ENCODE measurements at regions of chr11 and their contacts with region 1.

Region 1: DNA sequence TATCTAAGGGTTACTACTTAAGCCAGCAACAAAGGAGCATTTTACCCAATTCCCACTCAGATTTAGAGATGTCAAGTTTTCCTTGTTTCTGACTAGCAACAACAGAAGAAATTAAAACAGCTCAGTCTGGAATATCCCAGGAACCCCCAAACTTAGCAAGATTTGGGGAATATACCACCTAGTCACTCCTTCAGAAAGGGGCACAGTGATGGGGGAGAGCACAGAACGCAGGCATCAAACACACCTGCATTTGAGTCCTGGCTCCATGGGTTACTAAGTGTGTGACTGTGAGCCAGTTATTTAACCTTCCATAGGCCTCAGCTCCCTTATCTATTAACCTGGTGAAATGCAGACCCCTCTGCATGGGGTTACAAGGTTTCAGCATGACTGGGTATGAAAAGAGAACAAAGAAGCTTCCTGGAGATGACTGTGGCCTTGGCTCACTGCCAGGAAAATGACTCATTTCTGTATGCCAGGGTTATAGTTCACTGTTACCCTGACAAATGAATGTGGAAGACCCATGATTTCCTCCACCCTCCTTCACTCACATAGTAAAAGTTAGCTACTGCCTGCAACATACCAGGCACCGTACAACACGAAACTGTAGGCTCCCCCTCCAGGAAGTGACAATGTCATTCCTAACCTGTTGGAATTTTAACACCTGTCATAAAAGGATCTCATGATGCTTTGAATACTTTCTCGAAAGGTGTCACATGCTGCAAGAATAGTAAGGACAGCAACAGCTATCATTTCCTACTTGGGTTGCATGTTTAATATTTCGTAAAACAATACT is 79.6 kb downstream of the ME3 start:
- DNase-seq: peak; percentile 91 to 100
- H3K4me3 ChIP-seq: no peak overlapping the region
- H3K27ac ChIP-seq: peak overlapping the region; percentile 97
- H3K4me1 ChIP-seq: peaks cover 66% of the 10 kb centered on the region
- H3K27me3 ChIP-seq: no peaks in the 10 kb centered on the region
- CTCF ChIP-seq: no peak

Region 2: GRCh38 chr11:86473991-86474833 is 118.6 kb before region 1 on chr11:
- CTCF ChIA-PET with region 1: no interaction called
- POLR2A ChIA-PET with region 1: interaction called, 12 read pairs
- intact Hi-C with region 1: no loop called
- DNase-seq: no peak
- H3K4me3 ChIP-seq: no peak overlapping the region
- H3K27ac ChIP-seq: peak overlapping the region; percentile 43
- H3K4me1 ChIP-seq: peaks cover 25% of the 10 kb centered on the region
- H3K27me3 ChIP-seq: no peaks in the 10 kb centered on the region
- CTCF ChIP-seq: no peak

Region 3: DNA sequence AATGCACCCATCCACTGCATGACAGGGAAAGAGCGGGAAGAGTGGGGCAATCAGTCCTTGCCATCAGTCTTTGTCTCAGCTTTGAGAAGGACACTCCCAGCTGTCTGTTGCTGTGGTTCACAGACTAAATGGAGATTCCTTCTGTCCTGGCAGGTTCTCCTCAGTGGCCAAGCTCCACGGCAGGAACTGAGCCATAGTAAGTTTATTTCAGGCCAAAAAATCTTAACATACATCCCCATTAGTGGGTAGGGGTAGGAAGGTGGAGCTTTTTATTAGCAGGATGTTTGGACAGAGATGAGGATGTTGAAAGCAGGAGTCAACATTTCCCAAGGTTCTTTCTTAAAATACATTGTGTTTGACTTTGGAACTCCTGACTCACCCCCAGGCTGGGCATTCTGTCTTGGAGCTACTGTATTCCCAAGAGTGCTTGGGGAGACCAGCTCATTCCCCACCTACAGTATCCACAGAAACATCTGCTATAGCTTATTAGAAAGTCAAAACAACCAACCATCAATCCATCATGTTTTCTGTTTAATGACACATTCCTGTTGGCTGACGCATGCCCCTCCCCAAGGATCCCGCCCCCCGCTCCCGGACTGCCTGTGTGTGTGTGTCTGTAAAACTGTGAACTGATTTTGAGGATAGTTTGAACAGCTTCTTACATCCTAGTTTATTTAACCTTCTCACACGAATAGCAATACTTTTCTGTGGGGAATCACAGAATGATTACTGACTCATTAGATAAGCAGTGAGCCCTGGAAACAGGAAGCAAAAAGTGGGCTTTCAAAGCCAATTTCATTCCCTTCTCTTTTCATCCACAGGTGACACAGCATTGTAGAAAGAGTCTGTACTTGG is 108.7 kb before region 1 on chr11:
- CTCF ChIA-PET with region 1: interaction called, 6 read pairs
- POLR2A ChIA-PET with region 1: no interaction called
- intact Hi-C with region 1: loop called (anchors 1 kb)
- DNase-seq: peak; percentile 87 to 100
- H3K4me3 ChIP-seq: peak overlapping the region; percentile 4; the same call in 1 of the 2 replicates
- H3K27ac ChIP-seq: peak overlapping the region; percentile 97
- H3K4me1 ChIP-seq: peaks cover 50% of the 10 kb centered on the region
- H3K27me3 ChIP-seq: no peaks in the 10 kb centered on the region
- CTCF ChIP-seq: no peak

Region 4: DNA sequence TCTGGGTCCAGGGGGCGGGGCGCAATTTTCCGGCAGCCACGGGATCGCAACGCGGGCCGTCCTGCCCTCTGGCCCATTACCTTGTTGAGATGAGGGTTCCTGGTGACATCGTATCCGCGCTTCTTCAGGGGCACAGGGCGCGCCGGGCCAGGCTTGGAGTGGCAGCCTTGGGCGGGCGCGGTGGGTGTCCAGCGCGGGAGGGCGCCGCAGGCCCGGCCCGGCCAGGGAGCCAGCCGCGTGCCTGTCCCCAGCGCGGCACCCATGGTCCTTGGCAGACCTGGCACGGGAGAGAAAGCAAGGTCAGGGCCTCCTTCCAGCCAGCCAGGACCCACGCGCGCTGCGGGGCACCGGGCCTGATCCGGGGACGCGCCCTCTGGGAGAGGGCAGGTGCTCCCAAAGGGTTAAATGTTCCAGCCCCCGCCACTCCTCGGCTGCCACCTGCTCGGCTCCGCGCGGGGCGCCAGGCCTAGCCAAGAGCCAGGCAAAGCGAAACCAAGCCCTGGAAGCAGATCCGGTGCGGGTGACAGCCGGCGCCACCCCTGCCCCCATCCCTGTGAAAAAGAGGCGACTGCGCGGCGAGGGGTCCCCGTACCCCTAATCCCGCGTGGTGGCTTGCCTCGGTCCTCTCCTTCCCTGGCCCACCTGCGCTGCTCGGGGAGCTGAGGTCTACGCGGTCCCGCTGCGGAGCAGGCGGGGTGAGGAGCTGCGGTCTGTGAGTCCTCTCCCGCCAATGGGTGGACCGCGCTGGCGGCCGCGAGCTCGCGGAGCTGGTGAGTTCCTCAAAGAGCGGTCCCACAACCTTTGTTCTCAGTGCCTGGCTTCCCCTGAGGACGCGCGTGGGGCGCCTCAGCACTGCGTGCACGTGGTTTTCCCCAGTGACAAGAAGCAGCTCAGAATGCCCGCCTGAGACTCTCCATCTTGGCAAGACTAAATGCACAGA is 79.1 kb after region 1 on chr11 and contains the start of gene ME3:
- CTCF ChIA-PET with region 1: no interaction called
- POLR2A ChIA-PET with region 1: no interaction called
- intact Hi-C with region 1: loop called (anchors 5 kb)
- DNase-seq: peak; percentile 63 to 74
- H3K4me3 ChIP-seq: peak within 1 kb of the TSS; percentile 82
- H3K27ac ChIP-seq: peak within 1 kb of the TSS; percentile 87
- H3K4me1 ChIP-seq: peaks cover 52% of the 10 kb centered on the region
- H3K27me3 ChIP-seq: no peaks in the 10 kb centered on the region
- CTCF ChIP-seq: no peak
- total RNA-seq, gene ME3: 34.0 and 61.1 TPM in 2 replicates